Naive thymus-derived CD4-positive, alpha-beta T cell (primary cell): ENCODE measurements at regions of chr5 and their contacts with region 1.

Region 1: GRCh38 chr5:129094087-129094923 is at the start of gene ISOC1:
- DNase-seq: peak; percentile 89 to 95 (median 94)
- ATAC-seq: peak; percentile 96
- H3K4me3 ChIP-seq: peak within 1 kb of the TSS; percentile 72
- H3K4me3 Mint-ChIP-seq: peak within 1 kb of the TSS; percentile 89 to 95 (median 92)
- H3K27ac ChIP-seq: peak within 1 kb of the TSS; percentile 79
- H3K27ac Mint-ChIP-seq: peak within 1 kb of the TSS; percentile 52 to 94 (median 90)
- H3K4me1 ChIP-seq: peaks cover 7 to 8% of the 10 kb centered on the region in 2 donors
- H3K4me1 Mint-ChIP-seq: peaks cover 13 to 47% (median 35%) of the 10 kb centered on the region in 7 donors
- H3K27me3 ChIP-seq: no peaks in the 10 kb centered on the region
- H3K27me3 Mint-ChIP-seq: peaks cover 0 to 24% (median 0%) of the 10 kb centered on the region in 5 donors
- total RNA-seq, gene ISOC1: 5.3 to 18.9 (median 11.9) TPM

Region 2: DNA sequence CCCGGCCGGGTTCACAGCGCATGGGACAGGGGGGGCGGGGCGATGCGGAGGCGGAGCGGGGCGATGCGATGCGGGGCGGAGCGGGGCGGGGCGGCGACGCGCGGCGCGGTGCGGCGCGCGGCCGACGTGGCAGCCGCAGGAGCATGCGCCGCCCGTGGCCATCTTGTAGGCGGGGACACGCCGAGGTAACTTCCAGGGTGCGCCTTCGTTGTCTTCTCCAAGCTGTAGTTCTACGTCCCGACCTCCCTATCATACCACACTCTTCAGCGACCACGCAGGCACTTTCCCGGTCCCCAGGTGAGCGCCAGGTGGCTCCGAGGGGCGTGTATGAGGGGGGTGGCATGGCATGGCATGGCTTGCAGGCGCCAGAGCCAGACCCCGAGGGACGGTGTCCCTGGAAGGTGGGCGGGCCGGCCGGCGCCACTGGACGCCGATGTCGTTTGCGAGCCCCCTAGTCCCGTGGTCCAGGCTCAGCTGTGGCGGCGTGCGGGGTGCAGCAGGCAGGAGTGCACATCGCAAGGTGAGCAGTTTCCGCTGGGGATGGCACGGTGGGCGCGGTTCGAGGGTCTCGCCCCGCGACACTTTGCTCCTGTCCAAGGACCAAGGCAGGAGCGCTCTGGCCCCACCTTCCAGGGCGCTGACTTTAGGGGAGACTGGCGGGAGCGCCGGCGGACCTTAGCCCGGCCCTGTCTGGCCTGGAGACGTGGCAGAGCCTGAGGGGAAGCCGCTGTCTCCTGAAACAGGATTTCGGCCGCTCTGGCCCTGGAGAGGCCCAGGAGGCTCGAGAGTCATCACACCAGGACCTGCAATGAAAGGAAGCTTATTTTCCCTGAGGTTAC is 1576.6 kb before region 1 on chr5 and contains the start of gene PRRC1:
- CTCF ChIA-PET with region 1: no interaction called
- POLR2A ChIA-PET with region 1: no interaction called
- intact Hi-C with region 1: loop called (anchors 1 to 10 kb)
- DNase-seq: peak; percentile 63 to 80 (median 74)
- ATAC-seq: peak; percentile 99
- H3K4me3 ChIP-seq: peak within 1 kb of the TSS; percentile 94
- H3K4me3 Mint-ChIP-seq: peak within 1 kb of the TSS; percentile 87 to 92 (median 89)
- H3K27ac ChIP-seq: peak within 1 kb of the TSS; percentile 89
- H3K27ac Mint-ChIP-seq: peak within 1 kb of the TSS; percentile 48 to 91 (median 82)
- H3K4me1 ChIP-seq: peaks cover 0 to 18% of the 10 kb centered on the region in 2 donors
- H3K4me1 Mint-ChIP-seq: peaks cover 25 to 48% (median 38%) of the 10 kb centered on the region in 7 donors
- H3K27me3 ChIP-seq: no peaks in the 10 kb centered on the region
- H3K27me3 Mint-ChIP-seq: peaks cover under 1 to 7% (median 6%) of the 10 kb centered on the region in 5 donors
- total RNA-seq, gene PRRC1: 34.6 to 56.6 (median 49.4) TPM

Region 3: GRCh38 chr5:128494516-128494915 is 599.8 kb before region 1 on chr5:
- CTCF ChIA-PET with region 1: no interaction called
- POLR2A ChIA-PET with region 1: no interaction called
- intact Hi-C with region 1: no loop called
- DNase-seq: no peak
- ATAC-seq: no peak
- H3K4me3 ChIP-seq: no peak overlapping the region
- H3K4me3 Mint-ChIP-seq: no peak overlapping the region
- H3K27ac ChIP-seq: no peak overlapping the region
- H3K27ac Mint-ChIP-seq: no peak overlapping the region
- H3K4me1 ChIP-seq: no peaks in the 10 kb centered on the region
- H3K4me1 Mint-ChIP-seq: no peaks in the 10 kb centered on the region
- H3K27me3 ChIP-seq: no peaks in the 10 kb centered on the region
- H3K27me3 Mint-ChIP-seq: peaks cover 0 to 6% (median 0%) of the 10 kb centered on the region in 5 donors

Region 4: GRCh38 chr5:129125810-129126209 is 31.5 kb after region 1 on chr5:
- CTCF ChIA-PET with region 1: no interaction called
- POLR2A ChIA-PET with region 1: interaction called, 3 read pairs
- intact Hi-C with region 1: loop called (anchors 1 kb)
- DNase-seq: peak in 1 of 9 donors; percentile 17
- ATAC-seq: peak; percentile 49
- H3K4me3 ChIP-seq: peak overlapping the region; percentile 29
- H3K4me3 Mint-ChIP-seq: peak overlapping the region in 9 of 10 donors; percentile 36 to 80 (median 63)
- H3K27ac ChIP-seq: peak overlapping the region; percentile 43
- H3K27ac Mint-ChIP-seq: peak overlapping the region; percentile 55 to 87 (median 82)
- H3K4me1 ChIP-seq: peaks cover 0 to 14% of the 10 kb centered on the region in 2 donors
- H3K4me1 Mint-ChIP-seq: peaks cover 7 to 18% (median 12%) of the 10 kb centered on the region in 7 donors
- H3K27me3 ChIP-seq: no peaks in the 10 kb centered on the region
- H3K27me3 Mint-ChIP-seq: no peaks in the 10 kb centered on the region

Region 5: GRCh38 chr5:129141696-129142095 is 47.4 kb after region 1 on chr5:
- CTCF ChIA-PET with region 1: no interaction called
- POLR2A ChIA-PET with region 1: no interaction called
- intact Hi-C with region 1: no loop called
- DNase-seq: no peak
- ATAC-seq: no peak
- H3K4me3 ChIP-seq: no peak overlapping the region
- H3K4me3 Mint-ChIP-seq: no peak overlapping the region
- H3K27ac ChIP-seq: no peak overlapping the region
- H3K27ac Mint-ChIP-seq: no peak overlapping the region
- H3K4me1 ChIP-seq: no peaks in the 10 kb centered on the region
- H3K4me1 Mint-ChIP-seq: no peaks in the 10 kb centered on the region
- H3K27me3 ChIP-seq: no peaks in the 10 kb centered on the region
- H3K27me3 Mint-ChIP-seq: peaks cover 0 to 2% (median 0%) of the 10 kb centered on the region in 5 donors